Calu3 (cell line): ENCODE measurements at regions of chr21 and their contacts with region 1.

Region 1: DNA sequence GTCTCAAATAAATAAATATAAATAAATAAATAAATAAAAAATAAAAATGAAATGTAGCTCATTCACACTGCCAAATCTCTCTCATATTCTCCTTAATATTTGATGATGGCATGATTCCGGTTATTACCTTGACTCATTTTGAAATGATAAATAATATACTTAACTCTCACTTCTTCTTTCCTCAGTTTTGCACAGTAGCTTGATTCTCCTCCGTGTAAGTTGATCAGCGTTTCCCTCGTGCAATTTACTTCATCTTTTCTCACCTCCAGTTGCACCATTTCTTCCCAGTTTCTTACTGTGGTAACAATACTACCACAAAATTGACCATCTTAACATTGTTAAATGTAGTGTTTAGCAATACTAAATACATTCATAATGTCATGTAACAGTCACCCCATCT is 111.6 kb downstream of the RIPK4 start:
- DNase-seq: no peak
- H3K4me3 Mint-ChIP-seq: no peak overlapping the region
- H3K27ac Mint-ChIP-seq: no peak overlapping the region
- H3K4me1 Mint-ChIP-seq: peaks cover 26% of the 10 kb centered on the region
- H3K27me3 Mint-ChIP-seq: no peaks in the 10 kb centered on the region
- CTCF ChIP-seq: no peak

Region 2: GRCh38 chr21:41304068-41304720 is 351.1 kb before region 1 on chr21:
- CTCF ChIA-PET with region 1: interaction called, 12 read pairs
- intact Hi-C with region 1: no loop called
- DNase-seq: no peak
- H3K4me3 Mint-ChIP-seq: no peak overlapping the region
- H3K27ac Mint-ChIP-seq: no peak overlapping the region
- H3K4me1 Mint-ChIP-seq: no peaks in the 10 kb centered on the region
- H3K27me3 Mint-ChIP-seq: peaks cover 48% of the 10 kb centered on the region
- CTCF ChIP-seq: no peak

Region 3: DNA sequence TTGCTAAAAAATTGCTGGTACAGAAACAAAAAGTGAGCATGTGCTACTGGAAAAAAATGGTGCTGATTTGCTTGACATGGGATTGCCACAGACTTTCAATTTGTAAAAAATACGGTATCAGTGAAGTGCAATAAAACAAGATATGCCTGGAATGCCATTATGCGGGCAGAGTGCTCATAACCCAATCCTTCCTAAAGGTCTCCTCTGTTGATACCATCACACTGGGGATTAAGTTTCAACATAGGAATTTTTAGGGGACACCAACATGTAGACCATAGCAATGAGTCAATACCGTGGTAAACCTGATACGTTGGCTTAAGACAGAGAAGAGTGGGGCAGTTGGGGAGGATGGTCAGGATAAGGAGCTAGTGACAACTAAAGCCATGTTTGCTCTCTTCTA is 208.7 kb before region 1 on chr21:
- CTCF ChIA-PET with region 1: no interaction called
- intact Hi-C with region 1: no loop called
- DNase-seq: no peak
- H3K4me3 Mint-ChIP-seq: no peak overlapping the region
- H3K27ac Mint-ChIP-seq: no peak overlapping the region
- H3K4me1 Mint-ChIP-seq: no peaks in the 10 kb centered on the region
- H3K27me3 Mint-ChIP-seq: no peaks in the 10 kb centered on the region
- CTCF ChIP-seq: no peak